ENCODE measurements at regions of chr3 and their contacts with region 1.

Region 1: DNA sequence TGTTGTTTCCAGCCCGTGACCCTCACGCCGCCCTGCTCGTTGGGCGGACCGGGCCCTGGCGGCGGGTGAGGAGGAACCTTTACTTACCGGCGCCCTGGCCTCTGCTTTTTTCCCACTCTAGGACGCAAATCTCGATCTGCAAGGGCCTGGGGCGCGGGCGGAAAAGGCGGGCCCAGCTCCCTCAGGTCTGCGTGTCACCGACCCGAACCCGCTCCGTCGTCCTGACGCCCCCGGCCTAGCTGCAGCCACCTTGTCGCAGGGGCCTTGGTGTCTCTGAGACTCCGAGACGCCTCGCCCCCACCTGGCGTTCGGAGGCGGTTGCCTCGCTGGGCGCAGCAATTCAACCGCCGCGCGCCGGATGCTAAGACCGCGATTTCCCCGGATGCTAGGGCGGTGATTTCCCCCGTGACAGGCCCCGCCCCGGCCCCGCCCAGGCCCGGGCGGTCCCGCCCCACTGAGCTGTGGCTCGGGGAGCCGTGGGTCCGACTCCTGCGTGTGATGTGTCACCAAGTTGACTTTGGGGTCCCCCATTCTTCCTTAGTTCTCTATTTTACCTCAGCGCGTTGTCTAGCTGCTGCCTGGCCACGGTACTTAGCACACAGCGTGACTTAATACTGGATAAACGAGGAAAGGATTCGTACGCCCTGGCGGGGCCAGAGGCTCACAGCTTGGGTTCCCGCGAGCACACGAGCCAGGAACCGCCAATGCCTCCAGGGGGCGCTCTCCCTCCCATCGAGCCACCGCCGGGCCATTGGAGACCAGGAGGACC is at the start of gene RPL39L:
- DNase-seq: peak; percentile 88 to 97 (median 92)
- ATAC-seq: peak; percentile 96
- H3K4me3 ChIP-seq: peak within 1 kb of the TSS; percentile 65 to 77
- H3K4me3 Mint-ChIP-seq: peak within 1 kb of the TSS; percentile 92
- H3K27ac ChIP-seq: peak within 1 kb of the TSS; percentile 69 to 83
- H3K27ac Mint-ChIP-seq: peak within 1 kb of the TSS; percentile 95
- H3K4me1 ChIP-seq: peaks cover 11% of the 10 kb centered on the region
- H3K4me1 Mint-ChIP-seq: peaks cover 19% of the 10 kb centered on the region
- H3K27me3 ChIP-seq: no peaks in the 10 kb centered on the region
- H3K27me3 Mint-ChIP-seq: no peaks in the 10 kb centered on the region
- CTCF ChIP-seq: peak; percentile 70
- total RNA-seq, gene RPL39L: 0.65 to 0.94 TPM

Region 2: DNA sequence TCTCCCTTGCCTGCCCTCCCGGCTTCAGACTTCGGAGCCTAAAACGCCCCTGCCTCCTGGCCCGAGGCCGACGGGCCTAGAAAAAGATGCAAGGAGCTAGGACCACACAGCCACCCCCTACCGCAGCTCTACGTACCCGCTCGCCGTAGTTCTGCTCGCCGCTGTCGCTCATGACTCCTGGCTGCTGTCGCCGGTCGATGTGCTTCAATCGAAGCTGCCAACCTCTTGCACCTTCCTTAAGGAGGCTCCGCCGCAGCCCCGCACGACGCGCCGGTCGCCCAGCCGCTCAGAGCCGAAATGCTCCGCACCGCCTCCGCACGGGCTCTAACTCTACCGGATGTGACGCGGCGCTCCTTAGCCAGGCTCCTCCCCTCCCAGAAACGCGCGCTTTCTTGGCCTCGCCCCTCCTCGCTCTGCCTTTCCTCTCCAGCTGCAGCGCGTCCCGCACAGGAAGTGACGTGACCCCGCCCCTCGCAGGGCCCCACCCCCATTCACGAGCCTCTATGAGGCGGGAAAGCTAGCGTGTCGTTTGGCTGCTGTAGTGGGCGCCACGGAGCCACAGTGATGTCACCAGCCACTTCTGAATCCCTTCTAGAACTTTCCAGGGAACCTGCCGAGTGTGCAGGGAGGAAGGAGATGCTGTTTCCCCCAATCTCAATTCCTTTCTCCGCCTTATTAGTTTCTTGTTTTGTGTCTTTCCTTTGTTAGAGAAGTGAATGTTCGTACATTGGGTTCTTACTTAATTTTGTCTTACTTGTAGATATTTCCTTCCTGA is 1201.4 kb before region 1 on chr3 and contains the start of gene TRA2B:
- CTCF ChIA-PET with region 1: no interaction called
- POLR2A ChIA-PET with region 1: no interaction called
- intact Hi-C with region 1: loop called in 1 of 2 experiments (anchors 10 kb)
- DNase-seq: peak; percentile 97 to 99 (median 99)
- ATAC-seq: peak; percentile 88
- H3K4me3 ChIP-seq: peak within 1 kb of the TSS; percentile 93
- H3K4me3 Mint-ChIP-seq: peak within 1 kb of the TSS; percentile 100
- H3K27ac ChIP-seq: peak within 1 kb of the TSS; percentile 97 to 98
- H3K27ac Mint-ChIP-seq: peak within 1 kb of the TSS; percentile 100
- H3K4me1 ChIP-seq: peaks cover 13% of the 10 kb centered on the region
- H3K4me1 Mint-ChIP-seq: peaks cover 41% of the 10 kb centered on the region
- H3K27me3 ChIP-seq: no peaks in the 10 kb centered on the region
- H3K27me3 Mint-ChIP-seq: no peaks in the 10 kb centered on the region
- CTCF ChIP-seq: peak; percentile 41
- total RNA-seq, gene TRA2B: 455 to 472 TPM

Region 3: DNA sequence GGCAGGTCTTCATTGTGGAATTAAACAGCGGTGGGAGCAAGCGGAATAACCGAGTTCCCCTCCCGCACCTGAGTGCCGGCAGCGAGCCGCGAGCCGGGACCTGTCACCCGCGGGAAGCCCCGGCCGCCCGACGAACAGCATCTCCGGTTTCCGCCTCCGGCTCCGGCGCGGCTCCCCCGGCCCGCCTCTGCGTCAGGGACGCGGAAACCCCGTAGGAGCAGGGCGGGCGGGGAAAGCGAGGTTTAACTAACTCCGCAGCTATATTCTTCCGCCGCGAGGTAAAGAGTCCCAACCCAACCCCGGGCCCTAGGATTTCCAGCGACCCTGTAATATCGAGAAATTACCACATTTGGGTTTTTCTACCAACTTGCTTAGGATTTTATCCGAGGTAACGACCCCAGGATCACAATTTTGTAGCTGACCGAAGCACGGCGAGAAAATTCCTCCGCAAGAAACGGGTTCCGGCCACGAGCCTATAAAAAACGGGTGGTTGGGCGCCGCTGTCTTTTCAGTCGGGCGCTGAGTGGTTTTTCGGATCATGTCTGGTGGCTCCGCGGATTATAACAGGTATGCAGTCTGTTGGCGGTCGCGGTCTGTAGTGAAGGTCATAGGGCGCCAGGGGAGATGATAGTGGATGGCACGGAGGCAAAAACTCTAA is 356.1 kb before region 1 on chr3 and contains the start of gene EIF4A2:
- CTCF ChIA-PET with region 1: no interaction called
- POLR2A ChIA-PET with region 1: interaction called, 8 read pairs
- intact Hi-C with region 1: loop called (anchors 2 kb)
- DNase-seq: peak; percentile 79 to 96 (median 88)
- ATAC-seq: peak; percentile 67
- H3K4me3 ChIP-seq: peak within 1 kb of the TSS; percentile 90 to 95
- H3K4me3 Mint-ChIP-seq: peak within 1 kb of the TSS; percentile 99
- H3K27ac ChIP-seq: peak within 1 kb of the TSS; percentile 93 to 97
- H3K27ac Mint-ChIP-seq: peak within 1 kb of the TSS; percentile 99
- H3K4me1 ChIP-seq: peaks cover 38% of the 10 kb centered on the region
- H3K4me1 Mint-ChIP-seq: peaks cover 52% of the 10 kb centered on the region
- H3K27me3 ChIP-seq: no peaks in the 10 kb centered on the region
- H3K27me3 Mint-ChIP-seq: no peaks in the 10 kb centered on the region
- CTCF ChIP-seq: no peak
- total RNA-seq, gene EIF4A2: 934 to 978 TPM

Region 4: GRCh38 chr3:187025656-187026316 is 113.5 kb before region 1 on chr3:
- CTCF ChIA-PET with region 1: interaction called, 14 read pairs
- POLR2A ChIA-PET with region 1: interaction called, 3 read pairs
- intact Hi-C with region 1: loop called (anchors 1 to 5 kb)
- DNase-seq: peak in 4 of 9 experiments; percentile 39 to 72 (median 48)
- ATAC-seq: peak; percentile 3
- H3K4me3 ChIP-seq: peak overlapping the region; percentile 52 to 71
- H3K4me3 Mint-ChIP-seq: peak overlapping the region; percentile 83
- H3K27ac ChIP-seq: peak overlapping the region; percentile 62 to 64
- H3K27ac Mint-ChIP-seq: peak overlapping the region; percentile 97
- H3K4me1 ChIP-seq: peaks cover 44% of the 10 kb centered on the region
- H3K4me1 Mint-ChIP-seq: peaks cover 68% of the 10 kb centered on the region
- H3K27me3 ChIP-seq: no peaks in the 10 kb centered on the region
- H3K27me3 Mint-ChIP-seq: no peaks in the 10 kb centered on the region
- CTCF ChIP-seq: no peak

Region 5: GRCh38 chr3:187101184-187102072 is 37.9 kb before region 1 on chr3:
- CTCF ChIA-PET with region 1: interaction called, 12 read pairs
- POLR2A ChIA-PET with region 1: interaction called, 9 read pairs
- intact Hi-C with region 1: no loop called
- DNase-seq: peak; percentile 25 to 74 (median 55)
- ATAC-seq: peak; percentile 71
- H3K4me3 ChIP-seq: peak overlapping the region in 1 of 2 experiments; percentile 27
- H3K4me3 Mint-ChIP-seq: peak overlapping the region; percentile 54
- H3K27ac ChIP-seq: peak overlapping the region in 1 of 2 experiments; percentile 44
- H3K27ac Mint-ChIP-seq: peak overlapping the region; percentile 63
- H3K4me1 ChIP-seq: peaks cover 16% of the 10 kb centered on the region
- H3K4me1 Mint-ChIP-seq: peaks cover 19% of the 10 kb centered on the region
- H3K27me3 ChIP-seq: no peaks in the 10 kb centered on the region
- H3K27me3 Mint-ChIP-seq: no peaks in the 10 kb centered on the region
- CTCF ChIP-seq: no peak

Region 6: GRCh38 chr3:187125319-187126031 is 13.8 kb before region 1 on chr3:
- CTCF ChIA-PET with region 1: interaction called, 48 read pairs
- POLR2A ChIA-PET with region 1: interaction called, 16 read pairs
- intact Hi-C with region 1: loop called (anchors 1 kb)
- DNase-seq: no peak
- ATAC-seq: no peak
- H3K4me3 ChIP-seq: no peak overlapping the region
- H3K4me3 Mint-ChIP-seq: no peak overlapping the region
- H3K27ac ChIP-seq: no peak overlapping the region
- H3K27ac Mint-ChIP-seq: no peak overlapping the region
- H3K4me1 ChIP-seq: peaks cover 8% of the 10 kb centered on the region
- H3K4me1 Mint-ChIP-seq: peaks cover 12% of the 10 kb centered on the region
- H3K27me3 ChIP-seq: no peaks in the 10 kb centered on the region
- H3K27me3 Mint-ChIP-seq: no peaks in the 10 kb centered on the region
- CTCF ChIP-seq: no peak

Region 7: GRCh38 chr3:187164885-187165543 is 25.7 kb after region 1 on chr3:
- CTCF ChIA-PET with region 1: interaction called, 18 read pairs
- POLR2A ChIA-PET with region 1: interaction called, 4 read pairs
- intact Hi-C with region 1: loop called in 1 of 2 experiments (anchors 1 kb)
- DNase-seq: peak in 6 of 9 experiments; percentile 8 to 83 (median 38)
- ATAC-seq: peak; percentile 77
- H3K4me3 ChIP-seq: no peak overlapping the region
- H3K4me3 Mint-ChIP-seq: no peak overlapping the region
- H3K27ac ChIP-seq: no peak overlapping the region
- H3K27ac Mint-ChIP-seq: no peak overlapping the region
- H3K4me1 ChIP-seq: no peaks in the 10 kb centered on the region
- H3K4me1 Mint-ChIP-seq: peaks cover 3% of the 10 kb centered on the region
- H3K27me3 ChIP-seq: peaks cover 0 to 3% of the 10 kb centered on the region in 2 experiments
- H3K27me3 Mint-ChIP-seq: no peaks in the 10 kb centered on the region
- CTCF ChIP-seq: peak; percentile 90

Measured in CD8-positive, alpha-beta T cell (primary cell).